ENCODE measurements at regions of chr6 and their contacts with region 1.

Region 1: DNA sequence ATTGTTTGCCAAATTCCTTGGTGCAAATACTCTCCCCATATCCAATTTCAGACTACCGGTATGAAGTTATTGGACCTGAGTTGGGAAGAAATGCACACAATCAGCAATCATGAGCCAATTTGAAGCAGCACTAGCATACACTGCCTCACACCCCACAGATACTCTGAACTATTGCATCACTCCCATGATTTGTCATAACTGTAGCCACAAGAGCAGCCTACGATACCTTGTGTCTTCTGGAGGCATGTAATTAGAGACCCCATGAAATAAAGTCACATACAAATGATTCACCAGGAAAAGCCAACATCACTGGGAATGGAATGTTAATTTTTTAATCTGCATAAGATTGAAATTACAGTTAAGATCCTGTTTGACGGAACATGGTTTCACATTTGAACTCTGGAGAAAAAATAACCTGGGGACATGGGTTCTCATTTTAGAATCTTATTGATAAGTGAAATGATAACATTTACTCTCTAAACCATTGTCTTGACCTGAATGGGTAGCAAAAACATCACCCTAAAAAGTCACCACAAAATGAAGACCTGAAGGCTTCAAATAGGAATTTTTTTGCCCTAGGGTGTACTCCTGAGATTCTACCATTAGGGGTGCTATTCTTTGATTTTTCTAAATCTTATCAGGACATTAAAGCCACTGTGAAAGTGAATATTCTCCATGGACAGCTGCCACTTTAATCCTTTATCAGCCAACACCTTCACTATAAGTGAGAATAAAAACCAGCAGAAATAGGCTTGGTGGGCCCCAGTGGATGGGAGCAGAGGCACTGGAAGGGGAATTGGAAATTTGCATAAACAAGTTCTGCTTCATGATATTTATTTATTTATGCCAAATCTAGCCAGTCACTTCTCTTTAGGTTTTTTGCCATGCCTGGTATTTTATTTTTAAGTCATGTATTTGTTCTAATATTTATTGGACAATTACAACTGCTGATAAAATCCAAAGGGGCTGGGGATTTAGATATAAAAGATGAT is 34.5 kb upstream of the HBS1L start:
- DNase-seq: peak; percentile 63
- ATAC-seq: peak; percentile 91
- H3K4me3 ChIP-seq: peak overlapping the region; percentile 22; the same call in 1 of the 2 replicates
- H3K27ac ChIP-seq: 0 out of 2 replicates have a peak overlapping the region, but pooled peaks have one; percentile 15
- H3K4me1 ChIP-seq: peaks cover 36% of the 10 kb centered on the region
- H3K27me3 ChIP-seq: no peaks in the 10 kb centered on the region; a peak in 1 of 4 replicates
- CTCF ChIP-seq: peak; percentile 26 to 58 (median 43)
- EP300 ChIP-seq: peak; percentile 73 to 93
- POLR2A ChIP-seq: no peak
- RAD21 ChIP-seq: peak; percentile 36

Region 2: GRCh38 chr6:134979142-134979541 is 110.0 kb before region 1 on chr6:
- CTCF ChIA-PET with region 1: no interaction called
- POLR2A ChIA-PET with region 1: no interaction called
- RAD21 ChIA-PET with region 1: no interaction called
- SMC1A ChIA-PET with region 1: no interaction called
- in situ Hi-C with region 1: no loop called
- intact Hi-C with region 1: no loop called
- DNase-seq: peak; percentile 47
- ATAC-seq: peak; percentile 95
- H3K4me3 ChIP-seq: no peak overlapping the region
- H3K27ac ChIP-seq: peak overlapping the region; percentile 40; the same call in 1 of the 2 replicates
- H3K4me1 ChIP-seq: peaks cover 12% of the 10 kb centered on the region; the same call in 1 of the 2 replicates
- H3K27me3 ChIP-seq: no peaks in the 10 kb centered on the region
- CTCF ChIP-seq: no peak
- EP300 ChIP-seq: peak; percentile 53 to 88; a peak in 2 of 4 replicates
- POLR2A ChIP-seq: no peak
- RAD21 ChIP-seq: no peak

Region 3: DNA sequence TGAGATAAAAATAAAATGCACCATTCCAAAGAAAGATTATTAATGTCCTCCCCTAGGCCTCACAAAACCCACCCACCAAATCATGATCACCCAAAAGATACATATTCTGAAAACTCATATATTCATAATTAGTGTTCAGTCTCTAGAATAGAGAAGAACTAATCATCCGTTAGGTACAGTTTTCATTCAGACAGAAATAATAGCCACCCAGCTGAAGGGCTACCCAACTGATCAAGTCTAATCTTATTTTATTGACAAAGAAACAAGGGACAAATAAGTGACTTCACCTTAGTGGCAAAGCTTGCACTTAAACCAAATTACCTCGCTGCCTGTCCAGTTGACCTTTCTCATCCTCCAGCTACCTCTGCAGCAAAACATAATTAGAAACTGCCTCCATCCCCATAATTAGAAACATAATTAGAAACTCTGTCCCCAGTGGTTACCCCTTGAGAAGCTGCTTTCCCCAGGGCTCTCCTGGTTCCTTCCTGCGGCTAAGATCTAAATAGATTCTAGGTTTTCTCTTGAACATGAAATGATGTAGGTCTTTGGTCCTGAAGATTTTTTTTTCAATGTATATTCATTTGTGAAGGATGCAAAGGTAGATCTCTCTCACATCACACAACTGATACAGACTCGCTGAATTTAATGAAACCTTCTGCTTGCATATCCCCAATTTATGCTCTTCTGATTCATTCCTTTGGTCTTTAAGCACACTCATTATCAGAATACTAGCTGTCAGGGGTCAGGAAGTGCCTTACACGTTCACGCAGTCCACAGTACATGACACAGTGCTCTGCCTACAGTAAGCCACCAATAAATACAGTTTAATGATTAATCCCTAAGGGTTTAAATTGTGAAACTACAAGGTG is 80.8 kb before region 1 on chr6:
- CTCF ChIA-PET with region 1: interaction called, 28 read pairs
- POLR2A ChIA-PET with region 1: interaction called, 10 read pairs
- RAD21 ChIA-PET with region 1: interaction called, 36 read pairs
- SMC1A ChIA-PET with region 1: interaction called, 41 read pairs
- in situ Hi-C with region 1: no loop called
- intact Hi-C with region 1: loop called (anchors 2 kb)
- DNase-seq: peak; percentile 56
- ATAC-seq: peak; percentile 91
- H3K4me3 ChIP-seq: 0 out of 2 replicates have a peak overlapping the region, but pooled peaks have one; percentile 16
- H3K27ac ChIP-seq: peak overlapping the region; percentile 64
- H3K4me1 ChIP-seq: peaks cover 28% of the 10 kb centered on the region
- H3K27me3 ChIP-seq: no peaks in the 10 kb centered on the region
- CTCF ChIP-seq: no peak
- EP300 ChIP-seq: peak; percentile 43 to 66; a peak in 2 of 4 replicates
- POLR2A ChIP-seq: no peak
- RAD21 ChIP-seq: no peak

Region 4: DNA sequence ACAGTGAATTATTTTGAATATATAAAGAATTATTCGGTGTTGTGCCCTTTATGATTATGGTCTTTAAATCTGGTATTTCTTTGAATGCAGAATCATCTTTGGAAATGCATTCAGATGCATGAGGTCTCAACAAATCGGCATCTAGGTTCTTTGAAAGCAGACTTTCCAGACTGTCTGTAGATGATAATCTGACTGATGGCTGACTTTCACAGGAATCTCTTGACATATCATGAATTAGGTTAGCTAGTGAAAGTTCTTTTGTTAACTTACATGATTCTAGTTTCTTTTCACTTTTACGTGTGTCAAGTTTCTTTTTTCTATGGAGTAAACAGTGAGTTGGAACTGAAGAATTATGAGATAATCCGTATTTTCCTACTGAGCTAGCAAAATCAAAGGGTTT is 51.6 kb before region 1 on chr6:
- CTCF ChIA-PET with region 1: no interaction called
- POLR2A ChIA-PET with region 1: interaction called, 5 read pairs
- RAD21 ChIA-PET with region 1: interaction called, 3 read pairs
- SMC1A ChIA-PET with region 1: interaction called, 23 read pairs
- in situ Hi-C with region 1: no loop called
- intact Hi-C with region 1: no loop called
- DNase-seq: no peak
- ATAC-seq: no peak
- H3K4me3 ChIP-seq: no peak overlapping the region
- H3K27ac ChIP-seq: no peak overlapping the region
- H3K4me1 ChIP-seq: no peaks in the 10 kb centered on the region
- H3K27me3 ChIP-seq: no peaks in the 10 kb centered on the region
- CTCF ChIP-seq: no peak
- EP300 ChIP-seq: no peak
- POLR2A ChIP-seq: no peak
- RAD21 ChIP-seq: no peak

Region 5: DNA sequence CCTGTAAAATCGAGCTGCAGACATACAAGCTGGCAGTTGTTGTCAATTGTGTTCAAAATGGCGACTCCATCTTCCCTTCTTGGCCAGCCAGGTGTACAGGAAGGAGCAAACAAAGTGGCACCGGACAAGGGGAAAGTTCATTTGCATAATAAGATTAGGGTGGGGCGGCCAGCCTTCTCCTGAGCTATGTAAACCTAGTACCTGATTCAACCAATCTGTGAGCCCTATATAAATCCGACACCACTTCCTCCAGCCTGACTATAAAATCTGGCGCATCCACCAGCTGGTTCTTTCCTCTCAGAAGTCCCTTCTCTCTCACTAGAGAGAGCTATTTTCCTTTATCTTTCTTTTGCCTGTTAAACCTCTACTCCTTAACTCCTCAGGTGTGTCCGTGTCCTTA is 26.4 kb before region 1 on chr6:
- CTCF ChIA-PET with region 1: interaction called, 4 read pairs
- POLR2A ChIA-PET with region 1: interaction called, 25 read pairs
- RAD21 ChIA-PET with region 1: interaction called, 3 read pairs
- SMC1A ChIA-PET with region 1: interaction called, 23 read pairs
- in situ Hi-C with region 1: no loop called
- intact Hi-C with region 1: no loop called
- DNase-seq: no peak
- ATAC-seq: no peak
- H3K4me3 ChIP-seq: no peak overlapping the region
- H3K27ac ChIP-seq: no peak overlapping the region
- H3K4me1 ChIP-seq: no peaks in the 10 kb centered on the region; the same call in 1 of the 2 replicates
- H3K27me3 ChIP-seq: no peaks in the 10 kb centered on the region
- CTCF ChIP-seq: no peak
- EP300 ChIP-seq: no peak
- POLR2A ChIP-seq: no peak
- RAD21 ChIP-seq: no peak

Region 6: DNA sequence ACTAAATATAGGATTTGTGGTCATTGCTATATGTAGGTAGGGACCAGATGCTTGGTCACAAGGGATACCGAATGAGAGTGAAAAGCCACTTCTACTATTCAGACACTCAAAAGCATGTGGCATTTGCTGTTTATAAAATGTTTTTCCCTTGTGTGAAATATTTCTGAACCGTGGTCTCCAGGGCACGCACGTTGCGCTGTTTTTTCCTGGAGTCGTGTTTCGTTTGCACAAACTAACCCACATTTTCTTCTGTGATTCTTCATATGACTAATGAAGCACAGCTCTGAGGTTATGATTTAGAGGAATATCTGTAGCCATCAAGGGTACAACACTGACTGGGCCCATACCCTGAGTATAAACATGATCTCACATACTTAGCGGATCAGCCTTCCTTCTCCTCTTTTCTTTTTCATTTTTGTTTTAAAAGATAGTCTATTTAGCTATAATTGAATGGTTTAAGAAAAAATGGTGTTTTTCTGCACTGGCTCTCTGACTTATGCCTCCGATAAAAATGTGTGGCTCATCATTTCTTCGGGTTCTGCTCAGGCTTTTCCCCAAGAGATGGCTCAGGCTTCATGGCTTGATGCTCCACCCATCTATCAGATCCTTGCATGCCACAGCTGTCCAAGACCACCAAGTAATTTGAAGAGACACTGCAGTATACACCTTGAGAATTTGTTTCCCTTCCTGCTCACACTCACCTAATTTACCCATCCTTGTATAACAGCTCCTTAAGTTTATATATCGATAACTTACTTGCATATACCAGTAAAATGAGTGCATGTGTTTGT is 25.4 kb after region 1 on chr6:
- CTCF ChIA-PET with region 1: interaction called, 6 read pairs
- POLR2A ChIA-PET with region 1: interaction called, 4 read pairs
- RAD21 ChIA-PET with region 1: interaction called, 25 read pairs
- SMC1A ChIA-PET with region 1: interaction called, 11 read pairs
- in situ Hi-C with region 1: no loop called
- intact Hi-C with region 1: loop called (anchors 1 kb)
- DNase-seq: peak; percentile 67
- ATAC-seq: peak; percentile 90
- H3K4me3 ChIP-seq: no peak overlapping the region; the same call in 1 of the 2 replicates
- H3K27ac ChIP-seq: peak overlapping the region; percentile 56
- H3K4me1 ChIP-seq: peaks cover 42% of the 10 kb centered on the region
- H3K27me3 ChIP-seq: no peaks in the 10 kb centered on the region
- CTCF ChIP-seq: no peak
- EP300 ChIP-seq: peak; percentile 97 to 98
- POLR2A ChIP-seq: no peak
- RAD21 ChIP-seq: no peak

Region 7: DNA sequence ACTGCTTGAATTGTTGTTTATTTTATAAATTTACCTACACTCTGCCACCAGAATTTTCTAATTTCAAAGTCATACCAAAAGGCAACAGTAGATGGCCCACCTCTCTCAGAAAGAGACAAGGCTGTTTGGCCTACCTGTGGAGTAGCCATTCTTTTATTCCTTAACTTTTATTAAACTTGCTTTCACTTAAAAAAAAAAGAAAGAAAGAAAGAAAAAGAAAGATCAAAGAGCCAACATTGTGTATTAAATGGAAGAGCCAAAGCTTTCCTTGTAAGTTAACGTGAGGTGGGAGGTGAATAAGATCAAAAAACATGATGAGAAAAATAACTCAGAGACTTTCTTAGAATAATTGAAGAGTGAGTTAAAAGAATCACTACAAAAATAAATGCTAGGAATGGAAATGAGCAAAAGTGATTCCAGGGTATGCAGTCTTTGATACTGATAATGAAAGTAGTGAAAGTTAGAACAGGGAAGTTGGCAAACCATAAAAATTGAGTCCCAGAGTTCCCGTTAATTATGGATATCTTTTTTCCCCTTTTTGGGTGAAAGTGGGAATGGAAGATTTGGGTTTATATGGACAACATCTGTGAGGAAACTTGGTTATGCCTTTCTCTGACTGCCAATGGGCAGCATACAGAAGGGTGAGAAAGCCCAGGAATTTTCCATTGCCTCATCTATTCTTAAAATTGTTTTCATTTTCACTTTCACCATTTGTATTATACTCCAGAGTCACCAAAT is 56.1 kb after region 1 on chr6:
- CTCF ChIA-PET with region 1: interaction called, 46 read pairs
- POLR2A ChIA-PET with region 1: interaction called, 5 read pairs
- RAD21 ChIA-PET with region 1: interaction called, 75 read pairs
- SMC1A ChIA-PET with region 1: interaction called, 31 read pairs
- in situ Hi-C with region 1: no loop called
- intact Hi-C with region 1: no loop called
- DNase-seq: no peak
- ATAC-seq: peak; percentile 75
- H3K4me3 ChIP-seq: 0 out of 2 replicates have a peak overlapping the region, but pooled peaks have one; percentile 18
- H3K27ac ChIP-seq: 0 out of 2 replicates have a peak overlapping the region, but pooled peaks have one; percentile 29
- H3K4me1 ChIP-seq: peaks cover 40% of the 10 kb centered on the region
- H3K27me3 ChIP-seq: no peaks in the 10 kb centered on the region
- CTCF ChIP-seq: peak; percentile 50 to 72 (median 65)
- EP300 ChIP-seq: no peak
- POLR2A ChIP-seq: no peak
- RAD21 ChIP-seq: peak; percentile 93

Measured in GM12878 (cell line).